ENCODE measurements at regions of chr12 and their contacts with region 1.

Region 1: GRCh38 chr12:13100882-13101769 is 2.3 kb downstream of the GSG1 start:
- DNase-seq: peak; percentile 82
- H3K4me3 ChIP-seq: peak overlapping the region; percentile 53
- H3K27ac ChIP-seq: peak overlapping the region; percentile 98
- H3K27me3 ChIP-seq: no peaks in the 10 kb centered on the region
- CTCF ChIP-seq: no peak

Region 2: GRCh38 chr12:13196130-13196921 is 95.2 kb after region 1 on chr12 and contains the start of gene EMP1:
- CTCF ChIA-PET with region 1: interaction called, 3 read pairs
- POLR2A ChIA-PET with region 1: interaction called, 44 read pairs
- DNase-seq: peak; percentile 99
- H3K4me3 ChIP-seq: peak within 1 kb of the TSS; percentile 92
- H3K27ac ChIP-seq: peak within 1 kb of the TSS; percentile 96
- H3K27me3 ChIP-seq: no peaks in the 10 kb centered on the region
- CTCF ChIP-seq: no peak
- polyA plus RNA-seq, gene EMP1: 209 and 257 TPM in 2 replicates

Region 3: DNA sequence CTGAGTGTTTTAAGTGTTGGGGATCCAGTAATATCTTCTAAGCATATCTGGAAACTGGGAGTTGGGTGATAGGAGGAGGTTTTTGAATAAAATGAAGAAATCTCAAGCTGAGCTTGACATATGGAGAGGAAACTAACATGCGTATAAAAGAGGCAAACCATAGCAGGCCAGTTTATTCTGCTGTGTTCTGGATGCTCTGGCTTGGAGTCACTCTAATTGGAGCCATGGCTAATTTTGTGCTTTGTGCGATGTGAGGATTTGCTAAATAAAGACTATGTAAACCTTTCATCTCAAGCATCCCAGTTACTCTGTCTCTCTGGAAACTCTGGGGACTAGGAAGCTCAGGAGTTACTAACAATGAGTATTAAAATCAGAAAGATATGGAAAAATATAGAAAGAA is 1330.8 kb after region 1 on chr12:
- CTCF ChIA-PET with region 1: no interaction called
- POLR2A ChIA-PET with region 1: no interaction called
- DNase-seq: no peak
- H3K4me3 ChIP-seq: no peak overlapping the region
- H3K27ac ChIP-seq: no peak overlapping the region
- H3K27me3 ChIP-seq: no peaks in the 10 kb centered on the region
- CTCF ChIP-seq: no peak